Aorta (tissue), 5 donors: ENCODE measurements at regions of chr12 and their contacts with region 1.

Region 1: GRCh38 chr12:98644711-98645402 is at the starts of genes APAF1 and IKBIP:
- DNase-seq: peak; percentile 98 to 99
- ATAC-seq: peak; percentile 99
- H3K4me3 ChIP-seq: peak within 1 kb of the TSS; percentile 69 to 95
- H3K27ac ChIP-seq: peak within 1 kb of the TSS in 1 of 2 donors; percentile 0
- H3K4me1 ChIP-seq: no peaks in the 10 kb centered on the region
- H3K27me3 ChIP-seq: no peaks in the 10 kb centered on the region
- total RNA-seq, gene APAF1: 14.3 to 30.4 TPM
- total RNA-seq, gene IKBIP: 18.3 to 27.3 TPM

Region 2: DNA sequence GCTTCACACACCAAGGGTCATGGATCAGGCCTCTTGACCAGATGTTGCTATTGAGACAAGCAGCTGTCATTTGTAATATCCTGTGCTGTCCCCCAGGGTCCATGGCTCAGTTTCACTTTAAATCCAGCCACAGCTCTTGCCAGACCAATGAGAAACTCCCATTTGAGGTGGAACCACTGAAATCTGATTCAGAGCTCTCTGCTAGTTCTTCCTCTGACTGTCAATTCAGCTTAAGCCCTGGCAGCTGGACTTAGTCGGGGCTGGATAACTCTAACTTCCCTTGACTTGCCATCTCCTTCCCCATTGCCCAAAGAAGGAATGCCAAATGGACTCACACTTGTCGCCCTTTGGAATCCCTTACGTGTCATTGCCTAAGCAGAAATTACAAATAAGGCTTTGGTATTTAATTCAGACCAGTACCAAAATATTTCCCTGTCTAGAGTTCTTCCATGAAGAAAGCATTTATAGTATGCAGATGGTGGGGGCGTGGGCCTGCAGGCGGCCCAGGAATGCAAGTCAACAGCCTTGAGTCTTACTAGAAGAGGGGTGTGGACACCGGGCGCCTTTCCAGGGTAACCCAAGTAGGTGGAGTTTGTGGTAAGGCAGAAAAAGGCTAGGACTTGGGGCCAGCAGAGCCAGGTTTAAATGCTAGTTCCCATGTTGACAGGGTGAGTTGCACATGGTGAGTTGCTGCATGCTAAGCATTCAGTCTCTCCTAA is 226.3 kb before region 1 on chr12:
- intact Hi-C with region 1: loop called in 1 of 2 experiments (anchors 10 kb)
- DNase-seq: peak; percentile 96 to 97
- ATAC-seq: peak; percentile 90
- H3K4me3 ChIP-seq: no peak overlapping the region
- H3K27ac ChIP-seq: peak overlapping the region; percentile 91 to 94
- H3K4me1 ChIP-seq: no peaks in the 10 kb centered on the region
- H3K27me3 ChIP-seq: no peaks in the 10 kb centered on the region

Region 3: DNA sequence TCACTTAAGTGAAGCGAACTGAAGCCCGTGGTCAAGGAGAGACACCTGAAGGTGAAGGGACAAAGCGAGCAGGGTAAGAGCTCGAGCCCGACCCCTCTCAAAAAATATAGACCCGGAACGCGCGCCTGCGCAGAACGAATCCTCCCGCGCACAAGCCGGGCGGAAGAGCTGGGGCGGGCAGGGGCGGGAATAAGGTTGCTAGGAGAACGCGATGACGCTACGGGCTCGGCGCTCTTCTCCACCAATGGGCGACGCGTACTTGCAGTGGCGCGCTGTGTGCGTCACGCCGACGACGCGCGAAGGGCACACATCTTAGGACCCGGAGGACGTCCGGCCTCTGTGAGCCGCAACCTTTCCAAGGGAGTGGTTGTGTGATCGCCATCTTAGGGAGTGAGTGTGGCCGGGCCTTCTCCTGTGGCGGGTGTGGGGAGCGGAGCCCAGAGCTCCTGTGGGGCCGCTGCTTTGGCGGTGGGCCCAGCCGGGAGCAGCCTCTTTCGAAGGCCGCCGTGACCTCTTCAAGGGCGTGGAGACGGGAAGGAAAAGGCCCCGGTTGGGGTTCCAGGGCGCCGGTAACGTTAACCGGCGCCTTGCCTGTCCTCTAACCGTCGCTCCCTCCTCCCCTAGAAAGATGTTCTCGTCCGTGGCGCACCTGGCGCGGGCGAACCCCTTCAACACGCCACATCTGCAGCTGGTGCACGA is 51.4 kb before region 1 on chr12 and contains the start of gene SLC25A3:
- intact Hi-C with region 1: loop called (anchors 2 to 10 kb)
- DNase-seq: peak; percentile 98
- ATAC-seq: peak; percentile 100
- H3K4me3 ChIP-seq: peak within 1 kb of the TSS; percentile 59 to 98
- H3K27ac ChIP-seq: peak within 1 kb of the TSS; percentile 69 to 93
- H3K4me1 ChIP-seq: no peaks in the 10 kb centered on the region
- H3K27me3 ChIP-seq: no peaks in the 10 kb centered on the region
- total RNA-seq, gene SLC25A3: 310 to 358 TPM

Region 4: GRCh38 chr12:98698603-98699463 is 54.0 kb after region 1 on chr12:
- intact Hi-C with region 1: no loop called
- DNase-seq: peak in 1 of 2 donors; percentile 64
- ATAC-seq: peak; percentile 77
- H3K4me3 ChIP-seq: peak overlapping the region in 1 of 2 donors; percentile 34
- H3K27ac ChIP-seq: peak overlapping the region in 1 of 2 donors; percentile 41
- H3K4me1 ChIP-seq: no peaks in the 10 kb centered on the region
- H3K27me3 ChIP-seq: no peaks in the 10 kb centered on the region

Region 5: DNA sequence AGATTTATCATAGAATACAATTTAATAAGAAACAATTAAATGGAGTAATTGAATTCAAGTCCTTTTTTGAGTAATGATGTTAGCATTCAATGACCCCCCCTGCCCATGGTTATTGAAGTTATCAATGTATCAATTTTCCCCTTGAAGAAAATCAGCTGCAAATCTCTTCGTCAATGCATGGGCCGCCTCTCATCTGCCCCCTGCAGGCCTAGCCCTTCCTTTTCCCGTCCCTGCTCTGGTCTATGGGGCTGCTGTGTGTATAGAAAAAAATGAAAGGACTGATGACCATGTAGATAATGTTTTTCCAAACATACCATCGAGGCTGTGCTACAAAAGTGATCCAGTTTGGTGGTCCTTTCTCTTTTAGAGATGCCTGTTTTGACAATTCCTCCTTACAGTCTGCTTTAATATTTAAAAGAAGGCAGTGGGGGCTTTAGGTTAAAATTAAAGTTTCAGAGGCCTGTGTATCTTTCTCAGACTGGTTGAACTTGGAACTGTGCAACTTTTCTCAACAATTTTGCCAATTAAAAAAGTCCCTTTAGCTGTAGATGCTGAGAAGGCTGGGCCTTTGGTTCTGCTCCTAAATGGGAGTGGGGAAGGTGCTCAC is 98.6 kb after region 1 on chr12:
- intact Hi-C with region 1: no loop called
- DNase-seq: no peak
- ATAC-seq: no peak
- H3K4me3 ChIP-seq: no peak overlapping the region
- H3K27ac ChIP-seq: no peak overlapping the region
- H3K4me1 ChIP-seq: no peaks in the 10 kb centered on the region
- H3K27me3 ChIP-seq: no peaks in the 10 kb centered on the region

Region 6: DNA sequence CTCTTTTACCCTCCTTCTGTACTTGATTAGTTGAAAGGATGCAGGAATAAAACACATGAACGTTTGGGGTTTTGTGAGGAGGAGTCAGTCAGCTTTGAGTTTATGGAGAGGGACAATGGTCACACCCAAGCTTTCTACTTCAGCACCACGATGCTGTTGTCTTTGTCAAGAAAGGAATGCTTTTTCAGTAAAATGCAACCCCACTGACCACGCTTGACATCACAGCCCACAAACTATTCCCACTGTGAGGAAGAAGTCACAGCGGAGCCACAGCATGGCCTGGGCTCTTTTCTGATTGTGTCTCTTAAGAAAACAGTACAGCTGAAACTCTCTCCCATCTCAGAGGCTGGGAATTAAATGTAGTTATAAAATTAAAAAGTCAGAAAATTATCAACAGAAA is 135.4 kb after region 1 on chr12:
- intact Hi-C with region 1: no loop called
- DNase-seq: no peak
- ATAC-seq: no peak
- H3K4me3 ChIP-seq: no peak overlapping the region
- H3K27ac ChIP-seq: no peak overlapping the region
- H3K4me1 ChIP-seq: no peaks in the 10 kb centered on the region
- H3K27me3 ChIP-seq: no peaks in the 10 kb centered on the region